Aorta (tissue), 5 donors: ENCODE measurements at regions of chr2 and their contacts with region 1.

Region 1: DNA sequence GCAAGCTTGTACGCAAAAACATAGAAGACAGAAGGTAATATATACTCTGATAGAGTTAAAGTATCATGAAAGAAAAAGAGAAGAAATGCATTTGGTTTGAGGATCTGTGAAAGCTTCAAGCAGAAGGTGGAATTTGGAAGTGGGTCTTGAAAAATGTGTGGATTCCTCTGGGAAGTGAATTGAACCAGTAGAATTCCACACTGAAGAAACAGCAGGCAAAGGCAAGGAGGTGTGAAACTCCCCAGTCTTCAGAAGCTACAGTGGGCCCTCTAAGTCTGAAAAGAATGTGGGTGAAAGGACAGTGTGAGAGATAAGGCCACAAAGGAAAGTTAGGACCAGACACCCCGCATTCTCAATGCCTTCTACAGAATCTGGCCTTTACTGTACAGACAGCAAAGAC is 25.6 kb downstream of the COBLL1 start:
- DNase-seq: no peak
- ATAC-seq: no peak
- H3K4me3 ChIP-seq: no peak overlapping the region
- H3K27ac ChIP-seq: peak overlapping the region; percentile 14 to 81
- H3K4me1 ChIP-seq: peaks cover 2 to 6% of the 10 kb centered on the region in 2 donors
- H3K27me3 ChIP-seq: no peaks in the 10 kb centered on the region

Region 2: DNA sequence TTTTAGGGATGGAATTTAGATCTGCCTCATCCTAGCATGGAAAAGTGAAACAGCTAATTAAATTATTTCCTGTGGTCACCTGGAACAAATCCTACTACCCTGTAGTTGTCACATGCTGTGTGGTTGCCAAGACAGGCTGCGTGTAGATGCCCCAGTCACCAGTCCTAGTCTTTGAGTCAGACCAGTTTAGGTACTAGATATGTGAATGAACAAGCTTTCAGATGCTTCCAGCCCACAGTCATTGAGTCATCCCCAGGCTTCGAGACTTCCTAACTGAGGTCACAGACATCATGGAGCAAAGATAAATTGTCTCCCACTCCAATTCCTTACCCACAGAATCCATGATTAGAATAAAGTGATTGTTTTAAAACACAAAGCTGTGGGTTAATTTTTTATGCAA is 158.9 kb before region 1 on chr2:
- intact Hi-C with region 1: no loop called
- DNase-seq: no peak
- ATAC-seq: no peak
- H3K4me3 ChIP-seq: no peak overlapping the region
- H3K27ac ChIP-seq: no peak overlapping the region
- H3K4me1 ChIP-seq: no peaks in the 10 kb centered on the region
- H3K27me3 ChIP-seq: no peaks in the 10 kb centered on the region

Region 3: GRCh38 chr2:164782323-164782722 is 33.7 kb before region 1 on chr2:
- intact Hi-C with region 1: loop called in 1 of 2 experiments (anchors 5 kb)
- DNase-seq: no peak
- ATAC-seq: peak; percentile 85
- H3K4me3 ChIP-seq: no peak overlapping the region
- H3K27ac ChIP-seq: peak overlapping the region in 1 of 2 donors; percentile 51
- H3K4me1 ChIP-seq: peaks cover 7 to 11% of the 10 kb centered on the region in 2 donors
- H3K27me3 ChIP-seq: no peaks in the 10 kb centered on the region

Region 4: GRCh38 chr2:165219481-165219880 is 403.4 kb after region 1 on chr2:
- intact Hi-C with region 1: no loop called
- DNase-seq: no peak
- ATAC-seq: no peak
- H3K4me3 ChIP-seq: no peak overlapping the region
- H3K27ac ChIP-seq: no peak overlapping the region
- H3K4me1 ChIP-seq: no peaks in the 10 kb centered on the region
- H3K27me3 ChIP-seq: peaks cover 0 to 2% of the 10 kb centered on the region in 2 donors

Region 5: GRCh38 chr2:165274698-165275097 is 458.7 kb after region 1 on chr2:
- intact Hi-C with region 1: no loop called
- DNase-seq: peak; percentile 77 to 87
- ATAC-seq: peak; percentile 85
- H3K4me3 ChIP-seq: no peak overlapping the region
- H3K27ac ChIP-seq: no peak overlapping the region
- H3K4me1 ChIP-seq: no peaks in the 10 kb centered on the region
- H3K27me3 ChIP-seq: no peaks in the 10 kb centered on the region